ENCODE measurements at regions of chr14 and their contacts with region 1.

Region 1: GRCh38 chr14:61252369-61253063 is 28.6 kb downstream of the TMEM30B start:
- DNase-seq: peak; percentile 64
- CTCF ChIP-seq: peak; percentile 81

Region 2: GRCh38 chr14:60637479-60638315 is 614.8 kb before region 1 on chr14:
- in situ Hi-C with region 1: loop called (anchors 10 kb)
- DNase-seq: no peak
- CTCF ChIP-seq: no peak

Region 3: GRCh38 chr14:63147018-63147417 is 1894.5 kb after region 1 on chr14:
- in situ Hi-C with region 1: no loop called
- DNase-seq: no peak
- CTCF ChIP-seq: no peak

Measured in GM13976 (cell line).